ENCODE measurements at regions of chr7 and their contacts with region 1.

Region 1: DNA sequence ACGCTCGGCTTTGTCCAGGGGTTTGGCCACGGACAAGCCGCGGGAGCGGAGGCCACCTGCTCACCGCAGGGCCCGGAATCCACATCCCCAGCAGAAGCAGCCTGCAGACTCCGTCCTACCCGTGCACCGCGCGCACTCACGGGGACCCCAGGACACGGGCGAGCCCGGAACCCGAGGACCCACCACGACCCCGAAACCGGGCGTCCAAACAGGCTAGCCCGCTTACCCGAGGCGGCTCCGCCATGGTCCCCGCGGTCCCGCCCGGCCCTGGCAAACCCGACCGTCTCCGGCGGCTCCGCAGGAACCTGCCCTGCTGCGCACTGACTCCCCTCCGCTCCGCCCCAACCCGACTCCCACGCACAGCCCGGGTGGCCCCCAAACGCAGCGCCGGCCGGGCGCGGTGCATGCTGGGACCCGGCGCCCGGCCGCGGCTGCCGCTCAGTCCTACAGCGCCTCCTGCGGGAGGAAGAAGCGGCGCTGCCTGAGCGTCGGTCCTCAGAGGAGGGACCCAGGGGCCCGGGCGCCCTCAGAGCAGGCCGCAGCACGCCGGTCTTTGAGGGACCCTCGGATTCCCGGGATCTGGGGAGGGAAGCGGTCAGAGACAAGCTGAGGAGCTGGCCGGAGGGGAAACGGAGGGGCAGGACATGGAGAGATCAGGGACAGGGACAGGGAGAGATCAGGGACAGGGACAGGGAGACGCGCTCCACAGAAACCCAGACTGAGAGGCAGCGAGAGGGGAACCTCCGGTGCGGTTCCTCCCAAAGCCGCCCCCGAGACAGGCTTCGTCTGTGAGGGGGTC is at the start of gene ZNF786:
- DNase-seq: peak; percentile 86 to 97 (median 93)
- ATAC-seq: peak; percentile 85
- H3K4me3 ChIP-seq: peak within 1 kb of the TSS; percentile 83 to 98
- H3K4me3 Mint-ChIP-seq: peak within 1 kb of the TSS; percentile 99
- H3K27ac ChIP-seq: peak within 1 kb of the TSS; percentile 90 to 95
- H3K27ac Mint-ChIP-seq: peak within 1 kb of the TSS; percentile 100
- H3K4me1 ChIP-seq: peaks cover 31% of the 10 kb centered on the region
- H3K4me1 Mint-ChIP-seq: peaks cover 27% of the 10 kb centered on the region
- H3K27me3 ChIP-seq: no peaks in the 10 kb centered on the region
- H3K27me3 Mint-ChIP-seq: no peaks in the 10 kb centered on the region
- CTCF ChIP-seq: peak; percentile 90
- total RNA-seq, gene ZNF786: 4.7 to 5.7 TPM

Region 2: GRCh38 chr7:148856891-148857290 is 233.7 kb before region 1 on chr7:
- CTCF ChIA-PET with region 1: no interaction called
- POLR2A ChIA-PET with region 1: no interaction called
- intact Hi-C with region 1: loop called (anchors 10 kb)
- DNase-seq: peak in 2 of 9 experiments; percentile 34 to 47
- ATAC-seq: no peak
- H3K4me3 ChIP-seq: no peak overlapping the region
- H3K4me3 Mint-ChIP-seq: no peak overlapping the region
- H3K27ac ChIP-seq: no peak overlapping the region
- H3K27ac Mint-ChIP-seq: no peak overlapping the region
- H3K4me1 ChIP-seq: no peaks in the 10 kb centered on the region
- H3K4me1 Mint-ChIP-seq: peaks cover 12% of the 10 kb centered on the region
- H3K27me3 ChIP-seq: no peaks in the 10 kb centered on the region
- H3K27me3 Mint-ChIP-seq: no peaks in the 10 kb centered on the region
- CTCF ChIP-seq: no peak

Region 3: GRCh38 chr7:148987010-148987750 is 103.4 kb before region 1 on chr7:
- CTCF ChIA-PET with region 1: no interaction called
- POLR2A ChIA-PET with region 1: no interaction called
- intact Hi-C with region 1: loop called (anchors 1 kb)
- DNase-seq: peak; percentile 43 to 93 (median 80)
- ATAC-seq: peak; percentile 76
- H3K4me3 ChIP-seq: peak overlapping the region; percentile 82 to 97
- H3K4me3 Mint-ChIP-seq: peak overlapping the region; percentile 96
- H3K27ac ChIP-seq: peak overlapping the region; percentile 74 to 93
- H3K27ac Mint-ChIP-seq: peak overlapping the region; percentile 96
- H3K4me1 ChIP-seq: peaks cover 41% of the 10 kb centered on the region
- H3K4me1 Mint-ChIP-seq: peaks cover 52% of the 10 kb centered on the region
- H3K27me3 ChIP-seq: no peaks in the 10 kb centered on the region
- H3K27me3 Mint-ChIP-seq: no peaks in the 10 kb centered on the region
- CTCF ChIP-seq: no peak

Region 4: GRCh38 chr7:149028346-149029109 is 62.1 kb before region 1 on chr7 and contains the start of gene PDIA4:
- CTCF ChIA-PET with region 1: no interaction called
- POLR2A ChIA-PET with region 1: interaction called, 8 read pairs
- intact Hi-C with region 1: loop called (anchors 1 kb)
- DNase-seq: peak; percentile 98 to 100 (median 99)
- ATAC-seq: peak; percentile 88
- H3K4me3 ChIP-seq: peak within 1 kb of the TSS; percentile 58 to 78
- H3K4me3 Mint-ChIP-seq: peak within 1 kb of the TSS; percentile 87
- H3K27ac ChIP-seq: peak within 1 kb of the TSS; percentile 62 to 78
- H3K27ac Mint-ChIP-seq: peak within 1 kb of the TSS; percentile 94
- H3K4me1 ChIP-seq: peaks cover 27% of the 10 kb centered on the region
- H3K4me1 Mint-ChIP-seq: peaks cover 49% of the 10 kb centered on the region
- H3K27me3 ChIP-seq: no peaks in the 10 kb centered on the region
- H3K27me3 Mint-ChIP-seq: no peaks in the 10 kb centered on the region
- CTCF ChIP-seq: no peak
- total RNA-seq, gene PDIA4: 12.0 to 14.5 TPM

Region 5: GRCh38 chr7:149239345-149240191 is 149.0 kb after region 1 on chr7 and contains the start of gene ZNF212:
- CTCF ChIA-PET with region 1: no interaction called
- POLR2A ChIA-PET with region 1: no interaction called
- intact Hi-C with region 1: loop called in 1 of 2 experiments (anchors 1 kb)
- DNase-seq: peak; percentile 76 to 92 (median 89)
- ATAC-seq: peak; percentile 100
- H3K4me3 ChIP-seq: peak within 1 kb of the TSS; percentile 81 to 95
- H3K4me3 Mint-ChIP-seq: peak within 1 kb of the TSS; percentile 92
- H3K27ac ChIP-seq: peak within 1 kb of the TSS; percentile 41 to 67
- H3K27ac Mint-ChIP-seq: peak within 1 kb of the TSS; percentile 91
- H3K4me1 ChIP-seq: peaks cover 23% of the 10 kb centered on the region
- H3K4me1 Mint-ChIP-seq: peaks cover 34% of the 10 kb centered on the region
- H3K27me3 ChIP-seq: peaks cover 0 to 4% of the 10 kb centered on the region in 2 experiments
- H3K27me3 Mint-ChIP-seq: peaks cover 7% of the 10 kb centered on the region
- CTCF ChIP-seq: peak; percentile 85
- total RNA-seq, gene ZNF212: 20.9 to 22.1 TPM